Naive thymus-derived CD8-positive, alpha-beta T cell (primary cell): ENCODE measurements at regions of chr10 and their contacts with region 1.

Region 1: DNA sequence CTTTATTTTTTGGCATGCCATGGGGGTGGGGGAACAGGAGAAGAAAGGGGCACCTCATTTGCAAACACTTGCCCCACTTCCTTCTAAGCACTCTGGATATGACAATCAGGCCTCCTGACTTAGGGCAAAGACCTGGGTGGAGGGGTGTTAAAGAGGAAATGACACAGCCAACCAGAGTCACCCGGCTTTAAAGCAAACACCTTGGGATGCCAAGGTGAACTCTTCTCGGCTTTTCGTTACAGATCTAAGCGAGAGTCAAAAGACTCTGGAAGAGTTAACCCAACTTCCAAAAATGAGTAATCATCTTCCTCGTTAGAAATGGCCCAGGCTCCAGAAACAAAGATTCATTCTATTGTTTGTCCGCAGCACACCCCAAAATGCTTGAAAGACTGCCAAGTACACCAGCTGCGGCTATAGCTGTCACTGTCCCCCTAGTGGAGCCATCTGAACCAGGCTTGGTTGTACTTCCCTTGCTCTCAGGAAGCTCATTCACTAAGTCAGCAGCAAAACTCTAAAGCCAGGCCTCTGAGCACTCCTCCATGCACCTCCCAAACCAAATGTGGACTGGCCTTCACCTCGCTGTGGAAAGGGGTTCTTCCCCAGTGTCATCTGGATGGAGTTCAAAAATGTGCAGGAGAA is 24.8 kb downstream of the FAM53B start:
- DNase-seq: peak in 9 of 10 donors; percentile 47 to 85 (median 74)
- ATAC-seq: peak; percentile 54 to 61
- H3K4me3 Mint-ChIP-seq: peak overlapping the region; percentile 50 to 86 (median 74)
- H3K27ac Mint-ChIP-seq: peak overlapping the region; percentile 88 to 98 (median 96)
- H3K4me1 Mint-ChIP-seq: peaks cover 46 to 98% (median 86%) of the 10 kb centered on the region in 4 donors
- H3K27me3 Mint-ChIP-seq: no peaks in the 10 kb centered on the region

Region 2: GRCh38 chr10:124697830-124698544 is 21.3 kb before region 1 on chr10:
- POLR2A ChIA-PET with region 1: interaction called, 24 read pairs
- DNase-seq: peak in 2 of 10 donors; percentile 14 to 30
- ATAC-seq: peak; percentile 60 to 72
- H3K4me3 Mint-ChIP-seq: peak overlapping the region in 9 of 10 donors; percentile 20 to 82 (median 76)
- H3K27ac Mint-ChIP-seq: peak overlapping the region; percentile 85 to 97 (median 92)
- H3K4me1 Mint-ChIP-seq: peaks cover 47 to 99% (median 92%) of the 10 kb centered on the region in 4 donors
- H3K27me3 Mint-ChIP-seq: no peaks in the 10 kb centered on the region

Region 3: GRCh38 chr10:124703778-124704427 is 15.4 kb before region 1 on chr10:
- POLR2A ChIA-PET with region 1: interaction called, 24 read pairs
- DNase-seq: peak in 1 of 10 donors; percentile 31
- ATAC-seq: no peak
- H3K4me3 Mint-ChIP-seq: peak overlapping the region in 3 of 10 donors; percentile 1 to 39 (median 14)
- H3K27ac Mint-ChIP-seq: peak overlapping the region in 8 of 10 donors; percentile 57 to 97 (median 88)
- H3K4me1 Mint-ChIP-seq: peaks cover 42 to 99% (median 89%) of the 10 kb centered on the region in 4 donors
- H3K27me3 Mint-ChIP-seq: no peaks in the 10 kb centered on the region

Region 4: GRCh38 chr10:124708922-124709520 is 10.3 kb before region 1 on chr10:
- POLR2A ChIA-PET with region 1: interaction called, 22 read pairs
- DNase-seq: no peak
- ATAC-seq: no peak
- H3K4me3 Mint-ChIP-seq: peak overlapping the region in 1 of 10 donors; percentile 37
- H3K27ac Mint-ChIP-seq: peak overlapping the region in 7 of 10 donors; percentile 22 to 90 (median 52)
- H3K4me1 Mint-ChIP-seq: peaks cover 38 to 92% (median 79%) of the 10 kb centered on the region in 4 donors
- H3K27me3 Mint-ChIP-seq: no peaks in the 10 kb centered on the region

Region 5: DNA sequence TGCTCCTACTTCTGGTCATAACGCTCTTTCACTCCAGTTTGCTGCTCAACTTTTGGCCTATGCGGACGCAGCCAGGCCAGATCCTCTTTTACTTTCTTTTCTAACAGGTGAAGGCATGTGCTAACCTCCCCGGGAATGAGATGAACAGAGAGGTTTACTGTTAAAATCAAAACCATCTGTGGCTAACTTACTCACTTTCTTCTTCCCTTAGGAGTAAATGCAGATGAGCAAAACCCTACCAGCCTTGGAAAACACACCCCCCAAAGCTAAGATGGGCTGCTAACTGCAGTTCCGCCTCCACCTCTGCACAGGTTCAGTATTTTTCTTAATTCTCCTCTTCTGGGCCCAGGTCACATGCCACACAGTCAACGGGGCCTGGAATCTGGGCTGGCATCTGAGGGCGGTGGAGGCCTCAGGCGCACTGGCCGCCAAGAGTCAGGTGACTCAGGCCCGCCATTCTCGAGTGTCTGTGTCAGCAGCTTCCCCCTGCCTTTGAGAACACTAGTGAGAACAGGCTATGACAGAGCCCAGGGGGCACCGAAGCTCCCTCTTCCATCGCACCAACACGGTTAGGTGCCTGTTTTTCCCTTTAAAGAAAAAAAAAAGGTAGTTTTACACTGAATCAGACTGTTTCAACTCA is 13.7 kb after region 1 on chr10:
- POLR2A ChIA-PET with region 1: interaction called, 33 read pairs
- DNase-seq: no peak
- ATAC-seq: no peak
- H3K4me3 Mint-ChIP-seq: peak overlapping the region; percentile 16 to 77 (median 55)
- H3K27ac Mint-ChIP-seq: peak overlapping the region; percentile 19 to 96 (median 81)
- H3K4me1 Mint-ChIP-seq: peaks cover 49 to 99% (median 84%) of the 10 kb centered on the region in 4 donors
- H3K27me3 Mint-ChIP-seq: no peaks in the 10 kb centered on the region

Region 6: DNA sequence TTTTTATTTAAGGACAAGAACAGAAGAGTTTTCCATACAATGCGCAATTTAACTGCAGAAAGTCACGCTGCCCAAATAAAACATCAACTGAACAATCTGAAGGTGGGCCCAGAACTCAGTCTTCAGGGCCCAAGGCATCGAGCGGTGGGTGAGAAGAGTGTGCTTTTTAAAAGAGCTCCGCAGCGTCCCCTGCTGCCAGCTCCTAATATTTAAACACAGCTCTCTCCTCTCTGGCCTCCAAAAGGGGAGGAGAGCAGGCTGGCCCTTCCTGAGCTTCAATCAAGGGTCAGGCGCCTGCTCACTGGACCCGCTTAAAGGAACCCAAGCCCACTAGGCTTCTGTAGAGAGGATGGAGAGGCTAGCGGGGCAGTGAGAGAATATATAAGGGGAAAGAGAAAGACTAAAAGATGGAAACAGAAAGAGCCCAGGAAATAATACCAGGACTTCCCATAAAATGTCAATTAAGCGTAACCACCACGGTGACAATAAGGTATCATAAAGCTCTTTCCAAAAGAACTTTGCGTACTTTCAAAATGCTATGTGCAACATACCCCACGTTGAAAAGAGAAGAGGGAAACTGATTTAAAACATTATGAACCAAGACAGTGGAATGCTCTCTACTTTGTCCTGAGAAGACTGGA is 22.1 kb after region 1 on chr10:
- POLR2A ChIA-PET with region 1: interaction called, 52 read pairs
- DNase-seq: peak; percentile 60 to 85 (median 74)
- ATAC-seq: peak; percentile 55 to 59
- H3K4me3 Mint-ChIP-seq: peak overlapping the region; percentile 73 to 99 (median 96)
- H3K27ac Mint-ChIP-seq: peak overlapping the region; percentile 73 to 96 (median 87)
- H3K4me1 Mint-ChIP-seq: peaks cover 45 to 76% (median 71%) of the 10 kb centered on the region in 4 donors
- H3K27me3 Mint-ChIP-seq: no peaks in the 10 kb centered on the region